Prostate gland (tissue), 2 donors: ENCODE measurements at regions of chr16 and their contacts with region 1.

Region 1: GRCh38 chr16:15976929-15977637 is 27.7 kb downstream of the ABCC1 start:
- DNase-seq: no peak
- H3K4me3 ChIP-seq: no peak overlapping the region
- H3K27ac ChIP-seq: peak overlapping the region; percentile 38 to 71
- H3K4me1 ChIP-seq: no peaks in the 10 kb centered on the region
- H3K27me3 ChIP-seq: no peaks in the 10 kb centered on the region
- CTCF ChIP-seq: no peak
- POLR2A ChIP-seq: no peak

Region 2: DNA sequence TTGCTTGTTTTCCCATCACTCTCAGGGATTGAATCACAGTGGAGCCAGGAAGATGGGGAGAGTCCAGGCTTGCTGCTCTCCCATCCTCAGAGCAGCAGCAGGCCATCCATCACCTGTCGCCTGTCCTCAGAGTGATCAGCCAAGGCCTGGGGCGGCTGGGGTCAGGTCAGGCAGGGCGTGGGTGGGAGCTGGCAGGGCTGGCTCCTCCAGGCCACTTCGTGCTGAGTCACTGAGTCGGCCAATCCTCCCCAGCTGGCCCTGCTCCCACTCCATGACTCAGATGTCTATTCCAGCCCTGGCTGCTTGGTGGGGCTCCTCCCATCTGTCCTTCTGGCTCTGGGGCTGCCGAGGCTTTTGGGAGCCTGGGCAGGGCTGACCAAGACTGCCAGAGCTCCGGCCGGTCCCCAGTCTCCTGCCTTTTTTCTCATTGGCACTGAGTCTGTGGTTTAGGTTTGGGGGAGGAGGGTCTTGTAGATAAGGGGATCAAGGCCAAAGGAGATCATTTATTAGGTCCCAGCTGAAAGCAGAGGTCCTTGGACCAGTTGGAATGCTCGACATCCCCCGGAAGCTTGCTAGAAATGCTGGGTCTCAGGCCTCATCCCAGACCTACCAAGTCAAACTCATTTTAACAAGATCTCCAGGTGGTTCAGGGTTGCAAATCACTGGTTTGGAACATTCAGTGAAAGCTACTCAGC is 45.1 kb after region 1 on chr16:
- intact Hi-C with region 1: loop called (anchors 5 kb)
- DNase-seq: peak; percentile 86
- H3K4me3 ChIP-seq: no peak overlapping the region
- H3K27ac ChIP-seq: peak overlapping the region; percentile 39 to 48
- H3K4me1 ChIP-seq: peaks cover 6% of the 10 kb centered on the region
- H3K27me3 ChIP-seq: no peaks in the 10 kb centered on the region
- CTCF ChIP-seq: no peak
- POLR2A ChIP-seq: no peak